Common myeloid progenitor, CD34-positive (primary cell): ENCODE measurements at regions of chr3 and their contacts with region 1.

Region 1: GRCh38 chr3:71428841-71429596 is 154.5 kb downstream of the FOXP1 start:
- DNase-seq: peak; percentile 72 to 81 (median 79)
- H3K4me3 ChIP-seq: peak overlapping the region in 2 of 7 experiments; percentile 25 to 43
- H3K27ac ChIP-seq: peak overlapping the region; percentile 74 to 86
- H3K4me1 ChIP-seq: peaks cover 5 to 79% (median 44%) of the 10 kb centered on the region in 4 experiments
- H3K27me3 ChIP-seq: no peaks in the 10 kb centered on the region

Region 2: DNA sequence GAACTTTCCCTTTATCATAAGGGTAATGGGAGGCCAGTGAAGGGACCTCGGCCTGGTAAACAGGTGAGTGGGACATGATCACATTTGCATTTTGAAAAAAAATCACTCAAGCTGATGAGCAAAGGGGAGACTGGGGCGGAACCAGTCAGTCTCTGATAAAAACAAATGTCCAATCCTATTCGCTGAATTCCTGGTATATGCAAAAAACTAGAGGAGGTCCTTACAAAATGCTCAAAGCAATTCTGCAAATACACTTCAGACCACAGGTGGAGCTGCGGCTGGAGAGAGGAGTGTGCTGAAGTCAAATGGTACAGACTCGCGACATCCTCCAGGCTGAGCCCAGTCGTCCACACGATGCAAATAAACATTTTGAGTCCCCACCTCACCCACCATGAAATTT is 12.1 kb before region 1 on chr3:
- CTCF ChIA-PET with region 1: interaction called, 12 read pairs
- POLR2A ChIA-PET with region 1: no interaction called
- DNase-seq: peak; percentile 72 to 86 (median 78)
- H3K4me3 ChIP-seq: no peak overlapping the region
- H3K27ac ChIP-seq: no peak overlapping the region
- H3K4me1 ChIP-seq: peaks cover 9 to 46% (median 32%) of the 10 kb centered on the region in 4 experiments
- H3K27me3 ChIP-seq: no peaks in the 10 kb centered on the region

Region 3: GRCh38 chr3:71444028-71444860 is 15.2 kb after region 1 on chr3:
- CTCF ChIA-PET with region 1: interaction called, 14 read pairs
- POLR2A ChIA-PET with region 1: no interaction called
- DNase-seq: peak; percentile 95 to 98 (median 97)
- H3K4me3 ChIP-seq: peak overlapping the region in 5 of 7 experiments; percentile 5 to 52 (median 38)
- H3K27ac ChIP-seq: peak overlapping the region; percentile 74 to 81
- H3K4me1 ChIP-seq: peaks cover 53 to 98% (median 95%) of the 10 kb centered on the region in 4 experiments
- H3K27me3 ChIP-seq: no peaks in the 10 kb centered on the region